Right ventricle myocardium inferior (tissue), 1 donor: ENCODE measurements at regions of chr9 and their contacts with region 1.

Region 1: DNA sequence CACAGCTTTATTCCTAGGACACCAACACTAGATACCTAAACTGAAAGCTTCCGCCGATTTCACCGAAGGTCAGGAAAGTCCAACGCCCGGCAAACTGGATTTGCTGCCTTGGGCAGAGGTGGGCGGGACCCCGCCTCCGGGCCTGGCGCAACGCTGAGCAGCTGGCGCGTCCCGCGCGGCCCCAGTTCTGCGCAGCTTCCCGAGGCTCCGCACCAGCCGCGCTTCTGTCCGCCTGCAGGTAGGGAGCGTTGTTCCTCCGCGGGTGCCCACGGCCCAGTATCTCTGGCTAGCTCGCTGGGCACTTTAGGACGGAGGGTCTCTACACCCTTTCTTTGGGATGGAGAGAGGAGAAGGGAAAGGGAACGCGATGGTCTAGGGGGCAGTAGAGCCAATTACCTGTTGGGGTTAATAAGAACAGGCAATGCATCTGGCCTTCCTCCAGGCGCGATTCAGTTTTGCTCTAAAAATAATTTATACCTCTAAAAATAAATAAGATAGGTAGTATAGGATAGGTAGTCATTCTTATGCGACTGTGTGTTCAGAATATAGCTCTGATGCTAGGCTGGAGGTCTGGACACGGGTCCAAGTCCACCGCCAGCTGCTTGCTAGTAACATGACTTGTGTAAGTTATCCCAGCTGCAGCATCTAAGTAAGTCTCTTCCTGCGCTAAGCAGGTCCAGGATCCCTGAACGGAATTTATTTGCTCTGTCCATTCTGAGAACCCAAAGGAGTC is at the start of gene CD274:
- DNase-seq: peak; percentile 94
- ATAC-seq: peak; percentile 99
- total RNA-seq, gene CD274: 12.0 TPM

Region 2: DNA sequence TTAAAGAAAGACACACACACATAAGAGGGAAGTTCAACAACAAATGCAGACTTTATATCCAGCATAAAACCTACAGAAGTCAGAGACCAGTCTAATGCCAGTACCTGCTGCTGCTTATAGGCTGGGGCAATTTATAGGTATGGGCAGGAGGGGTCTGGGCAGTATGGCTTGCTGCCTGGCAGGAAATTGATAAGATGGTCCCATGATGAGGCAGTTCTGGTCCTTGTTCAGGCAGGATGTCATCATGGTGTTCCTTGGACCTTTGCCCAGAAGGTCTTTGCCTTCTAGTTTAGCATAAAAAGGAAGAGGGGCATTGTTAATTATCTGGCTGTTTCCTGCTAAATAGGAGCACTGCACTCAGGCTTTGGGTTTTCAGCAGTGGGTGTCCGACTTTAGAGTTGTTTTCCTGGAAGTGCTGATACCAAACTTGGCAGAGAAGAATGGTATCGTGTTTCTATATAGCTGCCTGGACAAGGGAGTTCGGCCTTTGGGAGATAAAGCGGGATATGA is 49.4 kb after region 1 on chr9:
- intact Hi-C with region 1: loop called (anchors 1 kb)
- DNase-seq: no peak
- ATAC-seq: peak; percentile 32

Region 3: DNA sequence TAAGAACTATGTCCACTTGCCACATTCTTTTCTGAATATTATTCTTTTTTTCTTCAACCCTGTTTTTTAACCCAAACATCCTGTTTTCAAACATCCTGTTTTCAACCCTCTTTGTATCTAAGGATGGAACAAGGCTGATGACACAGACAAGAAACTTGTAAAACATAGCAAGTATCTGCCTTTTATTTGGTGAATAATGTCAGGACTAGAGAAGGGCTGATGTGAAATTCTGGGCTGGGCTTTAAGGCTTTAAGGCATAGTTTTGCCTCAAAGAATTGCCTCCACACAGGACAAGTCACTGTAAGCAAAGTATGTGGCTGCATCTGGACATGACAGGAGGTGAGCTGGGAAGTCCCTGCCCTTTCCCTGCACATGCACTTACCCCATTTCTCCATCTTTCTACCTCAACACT is 135.9 kb after region 1 on chr9:
- intact Hi-C with region 1: loop called (anchors 1 kb)
- DNase-seq: no peak
- ATAC-seq: no peak